ENCODE measurements at regions of chr11 and their contacts with region 1.

Region 1: GRCh38 chr11:19553683-19554333 is 158.8 kb upstream of the NAV2 start:
- DNase-seq: peak; percentile 84
- ATAC-seq: peak; percentile 87 to 88

Region 2: DNA sequence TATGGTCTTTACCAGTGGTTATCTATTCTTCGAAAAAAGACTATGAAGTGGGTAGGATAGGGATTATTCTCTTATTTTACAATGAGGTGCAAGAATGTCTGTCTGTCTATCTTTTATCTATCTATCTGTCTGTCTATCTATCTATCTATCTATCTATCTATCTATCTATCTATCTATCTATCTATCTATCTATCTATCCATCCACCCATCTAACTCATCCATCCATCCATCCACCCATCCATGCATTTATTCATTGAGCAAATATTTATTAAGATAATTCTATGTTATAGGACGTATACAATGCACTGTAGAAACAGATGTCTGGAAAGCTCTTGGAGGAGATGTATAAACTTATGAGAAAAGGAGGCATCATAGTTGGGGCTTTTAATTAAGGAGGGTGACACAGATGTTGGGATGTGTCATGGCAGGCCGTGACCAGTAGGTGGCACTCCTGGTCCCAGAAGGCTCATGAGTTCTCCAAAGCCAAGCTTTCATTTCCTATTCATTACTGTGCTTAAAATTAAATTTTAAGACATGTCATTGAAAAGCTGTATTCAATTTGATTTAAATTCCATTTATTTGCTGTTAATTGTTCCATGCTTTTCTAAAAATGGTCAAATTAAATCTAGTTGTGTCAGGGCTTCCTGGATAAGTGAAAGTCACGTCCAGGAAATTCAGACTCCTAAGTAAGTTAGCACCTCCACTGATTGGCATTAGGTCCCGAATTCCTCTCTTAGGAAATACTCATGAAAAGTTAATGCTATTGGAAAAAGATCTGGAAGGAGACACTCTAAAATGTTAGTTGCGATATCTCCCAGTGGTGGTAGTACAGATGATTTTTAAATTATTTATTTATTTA is 294.1 kb before region 1 on chr11:
- intact Hi-C with region 1: loop called (anchors 5 to 10 kb)
- DNase-seq: peak; percentile 64
- ATAC-seq: peak; percentile 61 to 69

Region 3: DNA sequence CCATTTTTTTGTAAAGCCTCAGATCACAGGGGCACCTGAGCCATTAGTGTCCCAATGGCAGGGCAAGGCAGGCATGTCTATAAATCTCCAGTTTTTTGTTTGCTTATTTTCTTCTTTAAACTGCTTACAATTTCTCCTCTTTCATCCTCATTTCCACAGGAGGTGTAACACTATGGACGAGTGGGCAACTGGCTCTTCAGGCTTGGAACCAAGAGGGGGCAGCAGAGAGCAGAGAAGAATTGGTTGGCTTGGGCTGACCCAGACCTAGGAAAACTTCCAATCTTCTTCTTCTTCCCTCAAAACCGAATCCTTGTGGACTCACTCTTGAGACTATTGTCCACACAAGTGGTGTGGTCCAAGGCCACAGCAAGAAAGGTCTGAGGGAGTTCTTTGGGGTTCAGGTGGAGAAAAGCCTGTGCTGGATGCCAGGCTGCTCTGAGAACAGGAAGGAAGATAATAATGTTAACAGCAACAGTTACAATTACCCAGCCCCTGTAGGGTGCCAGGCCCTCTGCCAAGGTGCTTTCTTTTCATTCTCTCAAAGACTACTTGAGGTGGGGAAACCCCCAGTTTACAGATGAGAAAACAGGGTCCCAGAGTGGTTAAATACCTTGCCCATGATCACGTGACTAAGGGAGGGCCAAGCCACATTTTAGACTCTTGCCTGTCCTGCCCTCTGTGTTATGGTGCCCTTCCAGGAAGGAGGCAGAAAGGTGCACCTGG is 242.3 kb before region 1 on chr11:
- intact Hi-C with region 1: loop called (anchors 2 to 5 kb)
- DNase-seq: peak; percentile 65
- ATAC-seq: peak; percentile 83 to 88

Region 4: DNA sequence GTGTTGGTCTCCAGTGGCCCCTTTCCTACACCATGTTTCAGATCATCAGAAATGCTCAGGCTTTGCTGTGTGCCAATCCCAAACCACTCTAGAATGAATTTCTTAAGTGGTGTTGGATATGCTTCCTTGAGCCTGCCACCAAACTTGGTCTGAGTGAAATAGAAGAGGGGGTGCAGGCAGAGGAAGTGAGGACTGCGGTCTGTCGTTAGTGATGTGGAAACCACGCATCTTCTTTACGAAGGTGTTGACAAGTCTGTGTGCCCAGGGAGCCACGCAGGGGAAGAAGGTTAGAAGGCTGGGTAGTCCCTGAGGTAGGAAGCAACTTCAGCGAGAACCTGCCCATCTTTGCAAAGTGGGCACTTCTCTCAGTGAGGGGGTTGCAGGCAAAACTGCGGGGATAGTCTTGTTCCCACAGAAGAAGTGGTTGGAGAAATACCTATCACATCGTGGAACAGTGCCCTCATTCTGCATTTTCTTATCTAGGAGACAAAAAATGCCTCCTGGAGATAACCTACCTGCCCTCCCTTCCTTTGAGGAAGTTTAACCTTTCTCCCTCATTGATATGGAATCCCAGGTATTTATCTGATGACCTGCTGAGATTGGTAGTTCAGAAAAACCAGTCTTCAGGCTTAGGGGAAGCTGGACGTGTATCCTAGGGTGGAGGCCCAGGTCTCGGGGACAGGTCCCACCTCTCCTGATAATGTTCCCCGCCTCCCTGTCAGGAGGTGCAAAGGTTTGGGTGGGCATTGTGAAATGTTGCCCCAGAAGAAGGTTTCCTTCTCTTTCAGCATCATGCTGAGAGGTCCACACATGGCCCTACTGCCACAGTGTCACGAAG is 28.3 kb before region 1 on chr11:
- intact Hi-C with region 1: no loop called
- DNase-seq: no peak
- ATAC-seq: no peak

Region 5: GRCh38 chr11:19743622-19744021 is 189.8 kb after region 1 on chr11:
- intact Hi-C with region 1: no loop called
- DNase-seq: no peak
- ATAC-seq: peak in 1 of 2 donors; percentile 60